A549 (cell line): ENCODE measurements at regions of chr17 and their contacts with region 1.

Region 1: GRCh38 chr17:80899402-80900268 is 92.0 kb upstream of the CHMP6 start:
- DNase-seq: peak; percentile 60 to 70
- ATAC-seq: peak; percentile 69 to 80; a peak in 4 of 6 replicates
- H3K4me3 ChIP-seq: no peak overlapping the region
- H3K27ac ChIP-seq: no peak overlapping the region
- H3K4me1 ChIP-seq: no peaks in the 10 kb centered on the region
- CTCF ChIP-seq: peak; percentile 68
- EP300 ChIP-seq: no peak
- POLR2A ChIP-seq: no peak
- RAD21 ChIP-seq: peak; percentile 69 to 85

Region 2: GRCh38 chr17:80879723-80880647 is 19.6 kb before region 1 on chr17:
- CTCF ChIA-PET with region 1: interaction called, 14 read pairs
- POLR2A ChIA-PET with region 1: no interaction called
- DNase-seq: no peak
- ATAC-seq: no peak
- H3K4me3 ChIP-seq: no peak overlapping the region
- H3K27ac ChIP-seq: no peak overlapping the region
- H3K4me1 ChIP-seq: no peaks in the 10 kb centered on the region
- CTCF ChIP-seq: no peak
- EP300 ChIP-seq: no peak
- POLR2A ChIP-seq: no peak
- RAD21 ChIP-seq: no peak